Caco-2 (cell line): ENCODE measurements at regions of chr6 and their contacts with region 1.

Region 1: GRCh38 chr6:6696867-6697531 is 108.5 kb downstream of the LY86 start:
- DNase-seq: peak; percentile 53 to 55
- H3K4me3 ChIP-seq: no peak overlapping the region
- H3K4me3 Mint-ChIP-seq: no peak overlapping the region
- H3K27ac Mint-ChIP-seq: no peak overlapping the region
- H3K4me1 ChIP-seq: no peaks in the 10 kb centered on the region; the same call in 1 of the 2 replicates
- H3K4me1 Mint-ChIP-seq: no peaks in the 10 kb centered on the region
- H3K27me3 ChIP-seq: no peaks in the 10 kb centered on the region
- H3K27me3 Mint-ChIP-seq: peaks cover 3% of the 10 kb centered on the region
- CTCF ChIP-seq: peak; percentile 71 to 80

Region 2: DNA sequence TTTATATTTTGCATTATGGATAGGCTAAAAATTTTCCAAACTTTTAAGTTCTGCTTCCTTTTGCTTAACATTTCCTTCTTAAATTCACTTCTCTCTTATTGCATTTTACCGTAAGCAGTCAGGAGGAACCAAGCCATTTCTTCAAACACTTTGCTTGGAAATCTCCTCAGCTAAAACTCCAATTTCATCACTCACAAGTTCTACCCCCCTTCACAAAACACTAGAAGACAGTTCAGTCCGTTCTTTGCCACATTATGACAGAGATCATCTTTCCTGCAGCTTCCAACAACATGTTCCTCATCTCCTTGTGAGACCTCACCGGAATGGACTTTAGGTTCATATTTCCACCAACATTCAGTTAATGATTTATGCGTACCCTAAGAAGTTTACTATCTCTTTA is 187.7 kb before region 1 on chr6:
- CTCF ChIA-PET with region 1: no interaction called
- POLR2A ChIA-PET with region 1: no interaction called
- intact Hi-C with region 1: no loop called
- DNase-seq: no peak
- H3K4me3 ChIP-seq: no peak overlapping the region
- H3K4me3 Mint-ChIP-seq: no peak overlapping the region
- H3K27ac Mint-ChIP-seq: no peak overlapping the region
- H3K4me1 ChIP-seq: no peaks in the 10 kb centered on the region
- H3K4me1 Mint-ChIP-seq: no peaks in the 10 kb centered on the region
- H3K27me3 ChIP-seq: no peaks in the 10 kb centered on the region; the same call in 1 of the 2 replicates
- H3K27me3 Mint-ChIP-seq: peaks cover 17% of the 10 kb centered on the region
- CTCF ChIP-seq: no peak

Region 3: DNA sequence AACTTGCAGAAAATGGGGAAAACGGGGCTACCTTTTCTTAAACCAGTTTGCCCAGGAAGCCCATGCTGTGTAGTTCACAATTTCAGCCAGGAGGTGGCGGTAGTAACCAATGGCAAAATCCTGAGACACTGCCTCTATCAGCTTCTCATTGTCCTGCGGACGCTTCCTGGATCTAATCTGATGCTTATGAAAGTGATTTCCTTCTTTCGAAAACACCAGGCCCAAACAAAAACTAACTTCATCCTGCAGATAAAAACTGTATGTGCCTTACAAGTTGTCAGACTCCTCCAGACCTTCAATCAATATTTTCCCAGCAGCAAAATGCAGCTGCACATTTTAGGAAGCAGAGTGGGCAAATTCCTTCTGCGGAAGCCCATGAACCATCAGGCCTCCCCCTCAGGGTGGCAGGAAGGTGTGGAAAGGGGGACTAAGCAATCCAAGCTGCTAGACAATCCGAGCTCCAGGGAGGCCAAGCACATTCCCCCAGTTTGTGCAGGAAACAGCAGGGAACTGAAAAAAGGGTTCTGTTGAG is 20.0 kb before region 1 on chr6:
- CTCF ChIA-PET with region 1: interaction called, 5 read pairs
- POLR2A ChIA-PET with region 1: no interaction called
- intact Hi-C with region 1: loop called (anchors 1 kb)
- DNase-seq: peak; percentile 65 to 83
- H3K4me3 ChIP-seq: no peak overlapping the region
- H3K4me3 Mint-ChIP-seq: no peak overlapping the region
- H3K27ac Mint-ChIP-seq: no peak overlapping the region
- H3K4me1 ChIP-seq: peaks cover 3% of the 10 kb centered on the region
- H3K4me1 Mint-ChIP-seq: peaks cover 7% of the 10 kb centered on the region
- H3K27me3 ChIP-seq: no peaks in the 10 kb centered on the region
- H3K27me3 Mint-ChIP-seq: peaks cover 4% of the 10 kb centered on the region
- CTCF ChIP-seq: peak; percentile 86 to 92